Right ventricle myocardium superior (tissue), 1 donor: ENCODE measurements at regions of chr13 and their contacts with region 1.

Region 1: GRCh38 chr13:31885994-31886393 is 145.6 kb upstream of the FRY start:
- DNase-seq: no peak
- ATAC-seq: peak; percentile 60

Region 2: DNA sequence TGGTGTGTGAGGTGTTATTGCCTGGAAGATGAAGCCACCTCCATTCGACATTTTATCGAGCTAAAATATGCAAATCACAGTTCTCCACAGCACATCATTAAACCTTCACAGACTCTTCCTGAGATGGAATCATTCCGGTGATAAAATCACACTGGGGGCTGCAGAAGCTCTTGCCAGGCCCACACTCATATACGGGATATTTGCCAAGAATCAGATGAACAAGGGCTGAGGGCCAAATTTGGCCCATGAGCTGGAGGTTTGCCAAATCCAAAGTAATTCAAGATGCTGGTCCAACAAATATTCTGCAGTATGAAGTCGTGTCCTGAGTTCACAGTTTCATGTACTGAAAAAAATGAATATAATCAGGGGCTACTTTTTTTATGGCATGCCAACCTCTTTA is 163.3 kb before region 1 on chr13:
- intact Hi-C with region 1: no loop called
- DNase-seq: no peak
- ATAC-seq: no peak

Region 3: GRCh38 chr13:31846182-31846950 is 39.6 kb before region 1 on chr13:
- intact Hi-C with region 1: loop called (anchors 5 kb)
- DNase-seq: peak; percentile 96
- ATAC-seq: peak; percentile 98